Endothelial cell of umbilical vein (primary cell): ENCODE measurements at regions of chr1 and their contacts with region 1.

Region 1: DNA sequence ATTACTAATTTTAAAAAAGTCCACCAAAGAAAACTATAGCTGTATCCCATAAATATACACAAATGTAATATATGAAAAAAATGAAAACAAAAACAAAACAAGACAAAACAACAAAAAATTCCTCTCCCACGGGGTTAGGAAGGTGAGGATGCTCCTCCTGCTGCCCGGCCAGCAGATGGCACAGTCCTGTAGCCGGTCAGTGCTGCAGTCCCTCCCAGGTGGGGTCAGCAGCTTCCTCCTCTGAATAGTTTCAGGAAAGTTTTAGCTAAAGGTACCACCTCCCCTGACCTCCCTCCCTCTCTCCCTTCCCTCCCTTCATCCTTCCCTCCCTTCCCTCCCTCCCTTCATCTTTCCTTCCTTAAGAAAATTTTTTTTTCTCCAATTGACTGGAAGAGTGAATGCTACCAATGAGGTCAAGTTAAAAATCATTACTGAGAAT is 67.8 kb upstream of the BCL10 start:
- DNase-seq: no peak
- H3K4me3 ChIP-seq: peak overlapping the region in 1 of 3 experiments; percentile 20
- H3K27ac ChIP-seq: peak overlapping the region; percentile 99
- H3K4me1 ChIP-seq: peaks cover 67% of the 10 kb centered on the region
- H3K27me3 ChIP-seq: no peaks in the 10 kb centered on the region
- CTCF ChIP-seq: peak; percentile 65 to 74
- POLR2A ChIP-seq: peak; percentile 54

Region 2: DNA sequence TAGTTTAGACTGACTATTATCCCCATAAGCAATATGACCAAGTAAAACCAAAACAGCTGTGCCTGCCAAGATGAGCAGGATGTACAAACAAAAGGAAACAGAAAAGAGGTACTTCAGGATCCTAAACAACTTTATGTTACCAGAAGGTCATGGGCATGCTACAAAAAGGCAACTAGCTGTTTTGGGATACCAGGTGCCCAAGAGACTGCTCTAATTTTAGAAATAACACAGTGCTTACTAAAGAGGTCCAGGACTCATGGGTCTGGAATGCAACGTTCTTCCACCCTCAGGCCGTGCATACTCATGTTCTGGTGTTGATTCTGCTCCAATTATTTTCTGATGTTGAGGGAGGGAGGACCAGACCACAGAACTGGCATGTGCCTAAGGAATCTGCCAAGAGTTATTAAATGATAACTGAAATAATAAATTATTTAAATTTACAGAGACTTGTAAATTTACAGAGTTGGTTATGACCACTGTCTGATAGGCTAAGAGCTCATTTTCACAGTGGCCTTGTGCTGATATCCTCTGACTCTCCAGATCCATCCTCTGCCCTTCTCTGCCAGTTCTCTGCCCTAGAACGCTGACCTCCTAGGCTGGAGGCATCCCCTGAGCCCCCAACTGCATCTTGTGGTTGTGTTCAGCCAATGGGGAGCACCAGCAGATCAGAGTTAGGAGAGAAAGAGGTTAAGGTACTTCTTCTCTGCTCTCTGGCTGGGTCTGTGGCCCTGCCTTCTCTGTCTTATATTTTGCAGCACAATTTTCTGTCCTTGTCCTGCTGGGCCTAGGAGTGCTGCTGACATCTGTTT is 30.2 kb before region 1 on chr1:
- CTCF ChIA-PET with region 1: interaction called, 54 read pairs
- POLR2A ChIA-PET with region 1: interaction called, 7 read pairs
- dilution Hi-C with region 1: no loop called
- intact Hi-C with region 1: loop called (anchors 1 kb)
- DNase-seq: peak; percentile 87
- H3K4me3 ChIP-seq: no peak overlapping the region
- H3K27ac ChIP-seq: peak overlapping the region; percentile 93
- H3K4me1 ChIP-seq: peaks cover 63% of the 10 kb centered on the region
- H3K27me3 ChIP-seq: no peaks in the 10 kb centered on the region
- CTCF ChIP-seq: no peak
- POLR2A ChIP-seq: peak; percentile 59

Region 3: DNA sequence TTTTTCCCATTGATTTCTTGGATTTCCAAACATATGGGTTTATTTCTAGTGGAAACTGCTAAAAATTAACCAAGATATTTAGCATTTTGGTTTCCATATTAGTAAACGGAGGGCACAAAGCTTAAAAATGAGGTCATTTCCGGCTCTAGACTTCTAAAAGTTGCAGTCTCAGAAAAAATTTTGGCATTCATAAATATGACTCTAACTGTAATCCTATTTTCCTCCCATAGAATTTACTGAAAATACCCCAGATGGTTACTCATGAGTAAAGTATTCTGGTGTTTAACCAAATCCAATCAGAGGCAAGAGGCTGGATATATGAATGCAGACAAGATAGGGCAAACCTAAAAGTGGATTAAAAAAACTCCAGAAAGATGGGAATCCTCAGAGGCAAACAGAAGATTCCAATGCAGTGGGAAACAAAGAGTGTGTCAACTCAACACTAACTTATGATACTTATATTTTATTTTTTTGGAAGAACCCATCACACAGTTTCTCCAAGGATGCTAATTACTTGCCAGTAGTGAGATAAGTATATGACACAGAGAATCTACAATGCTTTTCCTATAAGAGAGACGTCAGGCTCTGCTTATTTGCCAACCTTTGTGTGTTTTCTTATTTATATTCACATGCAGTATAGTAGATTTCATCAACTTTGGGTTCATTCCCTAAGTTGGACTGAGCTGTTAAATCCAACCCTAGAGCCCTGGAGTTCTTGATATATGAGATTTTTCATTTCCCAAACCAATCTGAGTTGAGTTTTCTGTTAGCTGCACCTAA is 22.3 kb after region 1 on chr1:
- CTCF ChIA-PET with region 1: interaction called, 18 read pairs
- POLR2A ChIA-PET with region 1: no interaction called
- dilution Hi-C with region 1: no loop called
- intact Hi-C with region 1: no loop called
- DNase-seq: peak; percentile 63
- H3K4me3 ChIP-seq: no peak overlapping the region
- H3K27ac ChIP-seq: peak overlapping the region; percentile 76
- H3K4me1 ChIP-seq: peaks cover 21% of the 10 kb centered on the region
- H3K27me3 ChIP-seq: no peaks in the 10 kb centered on the region
- CTCF ChIP-seq: no peak
- POLR2A ChIP-seq: no peak

Region 4: DNA sequence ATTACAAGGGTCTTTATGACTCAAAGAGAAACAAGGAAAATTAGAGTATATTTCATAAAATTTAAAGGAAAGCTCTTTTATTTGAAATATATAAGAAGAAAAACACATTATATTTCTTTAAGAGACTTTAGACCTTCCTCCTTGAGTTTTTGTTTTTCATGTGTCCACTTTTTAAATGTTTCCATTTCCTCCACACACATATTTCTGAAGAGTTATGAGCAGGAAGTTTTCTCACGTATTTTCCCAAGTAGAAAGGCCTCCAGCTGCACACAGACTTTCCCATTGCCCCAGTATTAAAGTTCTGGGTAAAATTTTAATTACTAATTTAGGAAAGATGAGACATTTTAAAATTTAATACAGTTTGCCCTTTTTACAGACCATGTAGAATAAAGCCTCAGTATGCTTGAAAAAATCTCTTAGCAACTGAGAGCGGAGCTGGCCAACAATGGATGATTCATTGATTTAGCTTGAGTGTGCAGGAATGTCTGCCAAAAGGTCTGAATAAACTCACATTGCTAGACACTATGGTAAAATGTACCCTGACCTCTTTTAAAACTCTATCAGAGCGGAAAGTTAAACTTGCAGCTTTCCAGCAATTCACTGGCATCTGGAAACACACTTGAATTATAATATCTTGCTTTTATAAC is 62.7 kb after region 1 on chr1:
- CTCF ChIA-PET with region 1: interaction called, 34 read pairs
- POLR2A ChIA-PET with region 1: interaction called, 4 read pairs
- dilution Hi-C with region 1: no loop called
- intact Hi-C with region 1: loop called (anchors 1 kb)
- DNase-seq: peak; percentile 96
- H3K4me3 ChIP-seq: peak overlapping the region in 1 of 3 experiments; percentile 46
- H3K27ac ChIP-seq: peak overlapping the region; percentile 91
- H3K4me1 ChIP-seq: peaks cover 32% of the 10 kb centered on the region
- H3K27me3 ChIP-seq: no peaks in the 10 kb centered on the region
- CTCF ChIP-seq: no peak
- POLR2A ChIP-seq: no peak

Region 5: GRCh38 chr1:85464497-85465098 is 120.3 kb after region 1 on chr1:
- CTCF ChIA-PET with region 1: interaction called, 43 read pairs
- POLR2A ChIA-PET with region 1: interaction called, 30 read pairs
- dilution Hi-C with region 1: no loop called
- intact Hi-C with region 1: loop called (anchors 1 kb)
- DNase-seq: peak; percentile 90
- H3K4me3 ChIP-seq: peak overlapping the region; percentile 65 to 97 (median 91)
- H3K27ac ChIP-seq: peak overlapping the region; percentile 90
- H3K4me1 ChIP-seq: peaks cover 39% of the 10 kb centered on the region
- H3K27me3 ChIP-seq: no peaks in the 10 kb centered on the region
- CTCF ChIP-seq: no peak
- POLR2A ChIP-seq: peak; percentile 92

Region 6: DNA sequence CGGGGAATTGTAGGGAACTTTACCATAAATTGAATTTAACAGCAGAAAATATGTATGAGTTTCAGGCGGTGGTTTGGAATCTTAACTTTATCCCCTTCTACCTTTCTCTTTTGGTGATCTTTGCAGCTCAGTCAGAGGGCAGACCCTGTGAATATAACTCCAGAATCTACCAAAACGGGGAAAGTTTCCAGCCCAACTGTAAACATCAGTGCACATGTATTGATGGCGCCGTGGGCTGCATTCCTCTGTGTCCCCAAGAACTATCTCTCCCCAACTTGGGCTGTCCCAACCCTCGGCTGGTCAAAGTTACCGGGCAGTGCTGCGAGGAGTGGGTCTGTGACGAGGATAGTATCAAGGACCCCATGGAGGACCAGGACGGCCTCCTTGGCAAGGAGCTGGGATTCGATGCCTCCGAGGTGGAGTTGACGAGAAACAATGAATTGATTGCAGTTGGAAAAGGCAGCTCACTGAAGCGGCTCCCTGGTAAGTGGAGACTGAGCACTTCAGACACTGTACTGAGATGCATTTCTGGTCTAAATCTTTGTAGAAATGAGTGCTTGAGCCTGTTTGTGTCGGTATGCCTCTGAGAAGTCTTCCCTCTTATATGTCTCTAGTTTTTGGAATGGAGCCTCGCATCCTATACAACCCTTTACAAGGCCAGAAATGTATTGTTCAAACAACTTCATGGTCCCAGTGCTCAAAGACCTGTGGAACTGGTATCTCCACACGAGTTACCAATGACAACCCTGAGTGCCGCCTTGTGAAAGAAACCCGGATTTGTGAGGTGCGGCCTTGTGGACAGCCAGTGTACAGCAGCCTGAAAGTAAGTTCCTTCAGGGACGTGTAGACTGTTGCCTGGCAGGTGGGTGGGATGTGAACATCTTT is 237.8 kb after region 1 on chr1:
- CTCF ChIA-PET with region 1: interaction called, 10 read pairs
- POLR2A ChIA-PET with region 1: interaction called, 41 read pairs
- dilution Hi-C with region 1: no loop called
- intact Hi-C with region 1: loop called (anchors 1 kb)
- DNase-seq: peak; percentile 54
- H3K4me3 ChIP-seq: peak overlapping the region; percentile 57 to 98 (median 78)
- H3K27ac ChIP-seq: peak overlapping the region; percentile 92
- H3K4me1 ChIP-seq: peaks cover 16% of the 10 kb centered on the region
- H3K27me3 ChIP-seq: no peaks in the 10 kb centered on the region
- CTCF ChIP-seq: peak in 1 of 2 donors; percentile 7
- POLR2A ChIP-seq: peak; percentile 45